GM10248 (cell line): ENCODE measurements at regions of chr20 and their contacts with region 1.

Region 1: GRCh38 chr20:31661625-31662371 is 24.1 kb downstream of the COX4I2 start:
- DNase-seq: peak; percentile 91
- CTCF ChIP-seq: peak; percentile 73

Region 2: DNA sequence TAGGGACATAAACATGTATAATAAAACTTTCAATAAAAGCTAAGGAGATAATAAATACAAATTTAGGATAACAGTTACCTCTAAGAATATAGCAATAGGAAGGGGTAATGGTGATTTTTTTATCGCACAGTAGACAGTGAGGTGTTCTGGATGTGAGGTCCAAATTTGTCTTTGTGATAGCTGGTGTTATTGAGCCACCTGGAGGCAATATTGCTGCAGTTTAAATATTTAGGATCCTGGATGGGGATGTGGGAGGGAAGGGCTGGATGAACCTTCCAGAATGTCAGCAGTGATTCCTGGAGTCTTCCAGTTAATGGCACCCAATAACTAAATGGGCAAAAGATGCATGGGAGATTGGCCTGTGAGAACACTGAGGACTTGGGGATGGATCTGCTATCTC is 207.4 kb before region 1 on chr20:
- CTCF ChIA-PET with region 1: no interaction called
- POLR2A ChIA-PET with region 1: no interaction called
- DNase-seq: no peak
- CTCF ChIP-seq: no peak

Region 3: DNA sequence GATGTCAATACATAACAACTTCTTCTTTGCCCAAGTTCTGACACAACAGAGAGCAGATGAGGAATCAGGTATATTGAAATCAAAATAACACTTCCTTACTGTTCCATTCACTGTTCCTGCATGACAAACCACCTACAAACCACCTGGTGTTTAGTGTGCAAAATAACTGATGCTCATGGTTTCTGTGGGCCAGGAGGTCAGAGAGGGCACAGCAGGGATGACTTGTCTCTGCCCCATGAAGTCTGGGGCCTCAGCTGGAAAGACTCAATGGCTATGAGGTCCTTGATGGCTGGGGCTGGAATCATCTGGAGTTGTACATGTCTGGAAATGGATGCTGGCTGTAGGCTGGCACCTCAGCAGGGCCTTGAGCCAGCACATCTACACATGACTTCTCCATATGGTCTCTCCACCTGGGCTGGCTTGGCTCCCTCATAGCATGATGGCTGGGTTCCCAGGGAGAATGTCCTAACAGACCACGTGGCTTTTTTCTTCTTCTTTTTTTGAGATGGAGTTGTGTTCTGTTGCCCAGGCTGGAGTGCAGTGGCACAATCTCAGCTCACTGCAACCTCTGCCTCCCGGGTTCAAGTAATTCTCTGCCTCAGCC is 31.5 kb before region 1 on chr20:
- CTCF ChIA-PET with region 1: interaction called, 47 read pairs
- POLR2A ChIA-PET with region 1: no interaction called
- DNase-seq: no peak
- CTCF ChIP-seq: no peak

Region 4: DNA sequence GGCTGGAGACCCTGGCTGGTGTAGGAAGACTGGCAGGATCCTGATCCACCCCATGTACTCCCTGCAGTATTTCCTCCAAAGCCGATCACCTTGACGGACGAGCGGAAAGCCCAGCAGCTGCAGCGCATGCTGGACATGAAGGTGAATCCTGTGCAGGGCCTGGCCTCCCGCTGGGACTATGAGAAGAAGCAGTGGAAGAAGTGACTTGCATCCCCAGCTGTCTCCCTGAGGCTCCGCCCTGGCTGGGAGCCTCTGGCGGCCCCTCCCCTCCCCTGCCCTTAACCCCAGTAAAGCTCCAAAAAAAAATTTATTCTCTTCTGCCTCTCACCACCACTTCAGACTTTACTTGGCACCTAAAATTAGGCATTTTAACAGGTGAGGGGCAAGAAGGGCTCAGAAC is 17.1 kb before region 1 on chr20:
- CTCF ChIA-PET with region 1: interaction called, 41 read pairs
- POLR2A ChIA-PET with region 1: no interaction called
- DNase-seq: no peak
- CTCF ChIP-seq: no peak

Region 5: DNA sequence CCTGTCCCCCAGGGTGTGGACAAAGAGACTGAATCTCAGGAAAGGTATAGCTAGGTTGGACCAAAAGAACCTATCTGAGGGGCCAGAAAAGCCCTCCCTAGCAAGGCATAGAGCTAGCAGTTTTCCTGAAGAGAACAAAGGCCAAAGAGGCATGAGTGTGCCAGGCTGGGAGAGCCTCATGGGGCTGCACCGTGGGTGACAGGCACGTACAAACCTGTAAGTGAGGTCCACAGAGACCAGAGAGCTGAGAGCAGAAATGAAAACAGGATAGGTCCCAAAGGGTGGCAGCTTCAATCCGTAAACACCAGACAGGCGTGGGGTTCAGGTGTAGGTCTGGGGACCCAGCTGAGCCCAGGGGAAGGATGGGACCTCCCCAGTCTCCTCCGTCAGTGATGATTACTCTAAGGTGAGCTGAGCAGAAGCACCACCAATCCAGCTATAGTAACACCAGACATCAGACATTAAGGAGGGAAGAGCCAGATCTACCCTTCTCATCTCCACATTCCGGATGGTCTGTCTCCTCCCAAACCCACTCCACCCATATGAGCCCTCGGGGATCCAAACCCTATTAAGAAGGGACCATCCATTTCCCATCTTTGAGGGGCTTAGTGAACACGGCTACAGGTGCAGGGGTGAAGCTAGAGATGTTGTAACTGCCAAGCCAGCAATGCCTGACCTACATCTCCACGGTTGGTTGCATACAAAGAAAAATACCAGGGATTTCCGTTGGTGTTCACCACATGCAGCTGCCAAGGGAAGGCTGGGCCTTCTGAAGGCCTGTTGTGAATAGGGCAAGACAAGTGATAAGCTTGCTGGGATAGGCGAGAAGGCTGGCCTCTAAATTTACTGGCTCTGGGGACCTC is 22.6 kb after region 1 on chr20:
- CTCF ChIA-PET with region 1: interaction called, 37 read pairs
- POLR2A ChIA-PET with region 1: interaction called, 7 read pairs
- DNase-seq: no peak
- CTCF ChIP-seq: no peak

Region 6: DNA sequence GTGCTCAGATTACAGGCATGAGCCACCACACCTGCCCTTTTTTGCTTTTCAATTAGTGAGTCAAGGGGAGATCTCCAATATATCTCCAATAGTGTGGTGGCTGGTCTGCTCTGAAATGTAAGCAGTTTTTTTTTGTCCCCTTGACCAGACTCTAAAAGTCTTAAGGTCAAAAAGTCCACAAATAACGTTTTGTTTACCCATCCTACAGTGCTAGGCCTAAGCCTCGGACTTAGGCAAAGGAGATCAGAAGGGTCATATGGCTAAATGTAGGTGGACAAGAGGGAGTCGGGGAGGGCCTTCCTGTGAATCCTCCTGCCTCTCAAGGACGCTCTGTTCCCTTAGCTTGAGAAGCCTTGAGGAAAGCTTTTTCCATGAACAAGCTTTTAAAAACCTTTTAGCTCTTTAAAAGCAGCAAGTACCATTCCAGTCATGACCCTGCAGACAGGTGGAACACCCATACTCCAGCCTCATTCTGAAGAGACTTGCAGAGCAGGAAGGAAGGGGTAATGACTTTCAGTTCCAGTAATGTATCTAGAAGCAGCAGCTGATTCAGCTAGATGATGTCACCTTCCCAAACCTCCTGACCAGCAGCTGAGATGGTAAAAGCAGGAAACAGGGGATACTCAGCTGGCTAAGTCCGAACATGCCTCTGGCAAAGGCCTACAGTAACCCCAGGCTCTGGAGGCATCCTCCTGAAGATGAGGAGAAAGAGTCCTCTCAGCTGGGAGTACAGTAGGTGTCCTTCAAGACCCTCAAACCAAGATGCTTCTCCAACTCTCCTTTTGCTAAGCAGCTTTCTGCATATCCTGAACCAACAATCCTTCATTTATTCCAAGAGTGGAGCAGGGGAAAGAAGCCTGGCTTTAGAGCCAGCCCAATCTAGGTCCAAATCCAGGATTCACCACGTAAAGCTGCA is 37.3 kb after region 1 on chr20:
- CTCF ChIA-PET with region 1: interaction called, 28 read pairs
- POLR2A ChIA-PET with region 1: no interaction called
- DNase-seq: peak; percentile 73
- CTCF ChIP-seq: no peak

Region 7: GRCh38 chr20:31738729-31739561 is 77.1 kb after region 1 on chr20 and contains the start of gene TPX2:
- CTCF ChIA-PET with region 1: interaction called, 14 read pairs
- POLR2A ChIA-PET with region 1: no interaction called
- DNase-seq: peak; percentile 97
- CTCF ChIP-seq: no peak